Activated naive CD4-positive, alpha-beta T cell treated with anti-CD3 and anti-CD28 coated beads for 36 hours (primary cell): ENCODE measurements at regions of chr18 and their contacts with region 1.

Region 1: DNA sequence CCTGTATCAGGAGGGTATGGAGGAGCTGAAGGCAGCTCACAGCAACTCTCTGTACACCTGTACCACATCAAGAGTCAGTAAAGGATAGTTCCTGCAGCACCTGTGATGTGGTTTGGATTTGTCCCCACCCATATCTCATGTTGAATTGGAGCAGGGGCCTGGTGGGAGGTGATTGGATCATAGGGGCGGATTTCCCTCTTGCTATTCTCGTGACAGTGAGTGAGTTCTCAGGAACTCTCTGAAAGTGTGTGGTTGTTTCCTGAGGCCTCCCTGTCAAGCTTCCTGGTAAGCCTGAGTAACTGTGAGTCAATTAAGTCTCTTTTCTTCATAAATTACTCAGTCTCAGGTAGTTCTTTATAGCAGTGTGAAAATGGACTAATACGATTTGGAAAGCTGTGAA is 28.9 kb downstream of the OSBPL1A start:
- DNase-seq: peak; percentile 84
- H3K4me3 Mint-ChIP-seq: no peak overlapping the region
- H3K27ac Mint-ChIP-seq: peak overlapping the region; percentile 19
- H3K4me1 Mint-ChIP-seq: peaks cover 23% of the 10 kb centered on the region
- H3K27me3 Mint-ChIP-seq: no peaks in the 10 kb centered on the region

Region 2: DNA sequence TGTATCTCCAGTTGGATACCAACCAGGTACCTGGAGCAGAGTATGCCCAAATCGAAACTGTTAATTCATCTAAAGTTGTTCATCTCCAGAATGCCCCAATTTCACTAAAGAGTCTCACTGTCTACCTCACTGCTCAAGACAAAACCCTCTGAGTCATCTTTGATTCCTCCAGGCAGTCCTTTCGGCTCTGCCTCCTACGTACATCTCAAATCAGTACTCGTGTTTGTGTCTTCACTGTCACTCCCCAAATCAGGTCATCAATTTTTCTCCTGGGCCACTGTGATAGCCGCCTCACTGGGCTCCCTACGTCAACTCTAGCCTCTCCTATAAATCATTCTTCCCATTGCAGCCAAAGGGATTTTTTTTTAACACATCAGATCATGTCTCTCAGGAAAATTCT is 396.3 kb before region 1 on chr18:
- CTCF ChIA-PET with region 1: no interaction called
- intact Hi-C with region 1: loop called (anchors 2 kb)
- DNase-seq: peak; percentile 55
- H3K4me3 Mint-ChIP-seq: no peak overlapping the region
- H3K27ac Mint-ChIP-seq: no peak overlapping the region
- H3K4me1 Mint-ChIP-seq: peaks cover 53% of the 10 kb centered on the region
- H3K27me3 Mint-ChIP-seq: no peaks in the 10 kb centered on the region

Region 3: GRCh38 chr18:24063121-24063731 is 305.5 kb before region 1 on chr18:
- CTCF ChIA-PET with region 1: no interaction called
- intact Hi-C with region 1: loop called (anchors 5 kb)
- DNase-seq: peak; percentile 47
- H3K4me3 Mint-ChIP-seq: no peak overlapping the region
- H3K27ac Mint-ChIP-seq: peak overlapping the region; percentile 7
- H3K4me1 Mint-ChIP-seq: peaks cover 53% of the 10 kb centered on the region
- H3K27me3 Mint-ChIP-seq: no peaks in the 10 kb centered on the region

Region 4: GRCh38 chr18:24089076-24089475 is 279.7 kb before region 1 on chr18:
- CTCF ChIA-PET with region 1: no interaction called
- intact Hi-C with region 1: no loop called
- DNase-seq: no peak
- H3K4me3 Mint-ChIP-seq: no peak overlapping the region
- H3K27ac Mint-ChIP-seq: no peak overlapping the region
- H3K4me1 Mint-ChIP-seq: peaks cover 10% of the 10 kb centered on the region
- H3K27me3 Mint-ChIP-seq: no peaks in the 10 kb centered on the region

Region 5: DNA sequence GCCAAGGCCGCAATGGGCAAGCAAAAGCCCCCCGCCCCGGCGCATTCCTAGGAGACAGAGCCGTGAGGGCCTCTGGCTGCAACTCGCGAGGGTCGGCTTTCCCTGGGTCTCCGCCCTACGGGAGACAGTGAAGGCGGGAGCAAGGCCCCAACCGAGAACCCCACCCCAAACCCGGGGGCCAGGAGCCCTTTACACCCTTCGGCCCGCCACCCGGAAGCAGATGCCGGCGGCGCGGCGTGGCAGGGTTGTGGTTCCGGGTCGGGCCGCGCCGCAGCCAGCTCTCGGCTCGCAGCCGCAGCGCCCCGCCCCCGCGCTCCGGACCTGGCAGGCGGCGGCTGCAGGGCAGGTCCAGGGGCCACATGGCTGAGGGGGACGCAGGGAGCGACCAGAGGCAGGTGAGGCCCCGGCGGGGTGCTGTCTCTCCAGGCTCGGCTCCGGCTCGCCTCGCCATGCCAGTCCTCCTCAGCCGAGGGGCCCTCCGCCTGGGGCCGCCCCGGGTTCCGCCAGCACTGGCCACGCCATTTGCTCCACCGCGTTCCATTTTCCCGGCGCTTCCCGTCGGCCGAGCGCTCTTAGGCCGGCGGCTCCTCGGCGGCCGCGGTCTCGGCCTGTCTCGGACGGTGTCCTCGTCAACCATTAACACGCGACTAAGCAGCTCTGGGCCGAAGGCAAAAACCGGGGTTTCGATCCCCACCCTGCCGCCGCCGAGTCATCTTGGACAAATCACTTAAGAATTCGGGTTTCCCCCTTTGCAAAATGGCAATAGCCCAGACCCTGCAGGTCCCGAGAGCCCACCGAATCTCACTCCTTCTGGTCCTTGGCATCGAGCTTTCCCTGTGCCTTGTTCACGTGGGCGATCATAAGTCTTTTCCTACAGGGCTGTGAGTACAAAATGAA is 57.9 kb after region 1 on chr18 and contains the start of gene IMPACT:
- CTCF ChIA-PET with region 1: interaction called, 4 read pairs
- intact Hi-C with region 1: loop called (anchors 2 kb)
- DNase-seq: peak; percentile 75
- H3K4me3 Mint-ChIP-seq: peak within 1 kb of the TSS; percentile 91
- H3K27ac Mint-ChIP-seq: peak within 1 kb of the TSS; percentile 78
- H3K4me1 Mint-ChIP-seq: peaks cover 22% of the 10 kb centered on the region
- H3K27me3 Mint-ChIP-seq: peaks cover 17% of the 10 kb centered on the region
- total RNA-seq, gene IMPACT: 19.4 to 19.9 TPM

Region 6: GRCh38 chr18:26215247-26215970 is 1846.7 kb after region 1 on chr18:
- CTCF ChIA-PET with region 1: no interaction called
- intact Hi-C with region 1: loop called (anchors 2 kb)
- DNase-seq: peak; percentile 82
- H3K4me3 Mint-ChIP-seq: peak overlapping the region; percentile 44
- H3K27ac Mint-ChIP-seq: peak overlapping the region; percentile 88
- H3K4me1 Mint-ChIP-seq: peaks cover 33% of the 10 kb centered on the region
- H3K27me3 Mint-ChIP-seq: no peaks in the 10 kb centered on the region